H1 (cell line): ENCODE measurements at regions of chr11 and their contacts with region 1.

Region 1: GRCh38 chr11:342328-342727 is 21.7 kb upstream of the IFITM3 start:
- DNase-seq: no peak
- H3K4me3 ChIP-seq: no peak overlapping the region
- H3K27ac ChIP-seq: no peak overlapping the region
- H3K4me1 ChIP-seq: peaks cover 0 to 14% (median 9%) of the 10 kb centered on the region in 4 experiments; a peak in 5 of 7 replicates
- H3K27me3 ChIP-seq: no peaks in the 10 kb centered on the region
- CTCF ChIP-seq: no peak
- EP300 ChIP-seq: no peak
- POLR2A ChIP-seq: no peak
- RAD21 ChIP-seq: no peak

Region 2: GRCh38 chr11:236774-237767 is 105.3 kb before region 1 on chr11 and contains the start of gene PSMD13:
- CTCF ChIA-PET with region 1: no interaction called
- POLR2A ChIA-PET with region 1: no interaction called
- DNase-seq: peak in 1 of 2 experiments; percentile 87
- H3K4me3 ChIP-seq: peak within 1 kb of the TSS; percentile 96 to 98 (median 96)
- H3K27ac ChIP-seq: peak within 1 kb of the TSS; percentile 71; the same call in 1 of the 2 replicates
- H3K4me1 ChIP-seq: no peaks in the 10 kb centered on the region; a peak in 1 of 7 replicates
- H3K27me3 ChIP-seq: no peaks in the 10 kb centered on the region
- CTCF ChIP-seq: no peak
- EP300 ChIP-seq: no peak
- POLR2A ChIP-seq: peak in 1 of 2 experiments; percentile 18; a peak in 1 of 3 replicates
- RAD21 ChIP-seq: no peak
- total RNA-seq, gene PSMD13: 136 and 141 TPM in 2 replicates

Region 3: DNA sequence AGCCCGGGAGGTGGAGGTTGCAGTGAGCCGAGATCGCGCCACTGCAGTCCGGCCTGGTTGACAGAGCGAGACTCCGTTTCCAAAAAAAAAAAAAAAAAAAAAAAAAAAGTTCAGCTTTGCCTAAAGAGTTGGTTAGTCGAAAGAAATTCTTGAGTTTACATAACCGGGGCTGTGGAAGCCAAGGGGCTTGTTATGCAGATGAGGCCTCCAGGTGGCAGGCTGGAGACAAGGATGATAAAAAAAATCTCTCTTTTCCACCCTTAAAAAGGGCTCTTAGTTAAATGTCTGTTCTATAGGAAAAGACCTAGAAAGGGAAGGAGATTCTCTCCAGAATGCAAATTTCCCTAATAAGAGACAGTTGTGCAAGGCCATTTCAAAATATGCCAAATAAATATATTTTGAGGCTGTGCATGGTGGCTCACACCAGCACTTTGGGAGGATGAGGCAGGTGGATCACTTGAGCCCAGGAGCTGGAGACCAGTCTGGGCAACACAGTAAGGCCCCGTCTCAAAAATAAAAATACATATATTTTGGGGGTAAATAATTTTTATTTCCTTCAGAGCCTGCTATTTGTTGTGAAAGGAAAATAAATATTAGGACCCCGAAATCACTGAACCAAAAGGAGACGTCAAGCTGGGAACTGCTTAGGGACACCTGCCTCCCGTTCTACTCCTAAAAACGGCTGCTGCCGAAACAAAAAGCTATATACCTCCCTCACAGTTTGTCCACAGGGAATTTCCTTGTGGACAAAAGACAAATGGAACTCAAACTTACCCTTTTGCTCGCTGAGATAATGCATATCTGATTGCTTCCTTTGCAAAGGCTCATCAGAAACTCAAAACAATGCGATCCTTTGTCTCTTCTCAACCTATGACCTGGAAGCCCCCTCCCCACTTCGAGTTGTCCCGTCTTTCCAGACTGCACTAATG is 37.1 kb before region 1 on chr11:
- CTCF ChIA-PET with region 1: interaction called, 22 read pairs
- POLR2A ChIA-PET with region 1: interaction called, 7 read pairs
- DNase-seq: no peak
- H3K4me3 ChIP-seq: peak overlapping the region in 2 of 4 experiments; percentile 3 to 42; a peak in 2 of 8 replicates
- H3K27ac ChIP-seq: peak overlapping the region; percentile 31; the same call in 1 of the 2 replicates
- H3K4me1 ChIP-seq: peaks cover 17 to 46% (median 33%) of the 10 kb centered on the region in 4 experiments
- H3K27me3 ChIP-seq: no peaks in the 10 kb centered on the region; a peak in 1 of 7 replicates
- CTCF ChIP-seq: peak; percentile 19 to 44 (median 31); a peak in 3 of 4 replicates
- EP300 ChIP-seq: no peak
- POLR2A ChIP-seq: no peak
- RAD21 ChIP-seq: peak; percentile 34 to 39

Region 4: GRCh38 chr11:370087-371055 is 28.0 kb after region 1 on chr11:
- CTCF ChIA-PET with region 1: no interaction called
- POLR2A ChIA-PET with region 1: no interaction called
- DNase-seq: peak in 1 of 2 experiments; percentile 80
- H3K4me3 ChIP-seq: peak overlapping the region; percentile 70 to 78 (median 74)
- H3K27ac ChIP-seq: peak overlapping the region; percentile 45
- H3K4me1 ChIP-seq: peaks cover 0 to 10% (median 5%) of the 10 kb centered on the region in 4 experiments; a peak in 6 of 7 replicates
- H3K27me3 ChIP-seq: no peaks in the 10 kb centered on the region
- CTCF ChIP-seq: peak in 1 of 3 experiments; percentile 6; a peak in 1 of 4 replicates
- EP300 ChIP-seq: no peak
- POLR2A ChIP-seq: no peak; a peak in 1 of 3 replicates
- RAD21 ChIP-seq: no peak

Region 5: DNA sequence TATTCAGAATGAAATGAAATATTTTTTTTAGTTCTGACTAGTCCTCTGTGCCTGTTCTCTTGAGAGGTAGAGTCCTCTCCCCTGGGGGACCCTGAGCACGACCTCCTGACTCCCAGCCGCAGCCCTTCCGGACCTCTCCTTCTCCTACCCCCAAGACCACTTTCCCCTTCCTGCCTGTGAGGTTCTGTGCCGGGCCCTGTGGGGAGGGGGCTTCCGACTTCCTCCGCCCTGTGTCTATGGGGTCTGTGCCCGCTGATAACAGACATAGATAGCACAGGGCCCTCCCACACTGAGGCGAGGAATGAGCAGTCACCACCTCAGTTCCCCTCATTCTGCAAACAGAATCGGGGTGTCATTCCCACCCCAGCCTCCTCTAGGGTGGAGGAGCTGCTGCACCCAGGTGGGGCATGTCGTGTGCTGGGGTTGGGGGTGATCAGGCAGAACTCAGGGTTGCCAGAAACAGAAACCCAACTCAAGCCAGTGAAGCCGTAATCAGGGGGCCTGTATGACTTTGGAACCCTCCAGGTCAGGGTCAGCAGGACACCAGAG is 39.8 kb after region 1 on chr11:
- CTCF ChIA-PET with region 1: no interaction called
- POLR2A ChIA-PET with region 1: no interaction called
- DNase-seq: no peak
- H3K4me3 ChIP-seq: no peak overlapping the region
- H3K27ac ChIP-seq: no peak overlapping the region
- H3K4me1 ChIP-seq: no peaks in the 10 kb centered on the region
- H3K27me3 ChIP-seq: no peaks in the 10 kb centered on the region
- CTCF ChIP-seq: no peak
- EP300 ChIP-seq: no peak
- POLR2A ChIP-seq: no peak
- RAD21 ChIP-seq: no peak

Region 6: DNA sequence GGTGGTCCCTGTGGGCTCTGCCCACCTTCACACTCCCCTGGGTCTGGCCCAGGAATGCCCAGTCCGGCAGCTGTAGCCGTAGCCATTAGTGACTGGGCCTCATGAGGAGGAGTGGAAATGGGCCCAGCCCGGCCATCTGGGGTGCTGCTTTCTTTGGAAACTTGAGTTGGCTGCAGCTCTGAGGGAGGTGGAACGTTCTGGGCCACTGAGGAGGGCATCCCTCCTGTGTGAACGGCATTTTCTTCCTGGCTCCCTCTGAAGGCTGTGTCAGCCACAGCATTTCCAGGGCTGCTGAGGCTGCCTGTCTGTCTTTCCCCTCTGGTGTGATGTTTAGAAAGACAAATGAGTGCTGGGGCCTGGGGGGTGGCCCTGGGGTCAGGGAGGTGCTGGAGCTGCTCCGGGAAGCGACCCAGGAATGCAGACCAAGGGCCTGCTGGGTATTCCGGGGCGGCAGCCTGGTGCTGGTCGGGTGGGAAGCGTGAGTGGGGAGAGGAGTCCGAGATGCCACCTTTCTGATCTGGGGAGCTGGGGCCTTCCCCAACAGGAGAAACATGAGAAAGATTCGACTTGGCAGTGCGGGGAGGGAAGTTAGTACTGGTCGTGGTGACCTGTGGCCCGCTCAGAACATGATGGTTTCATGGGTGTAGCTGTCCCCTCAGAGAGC is 134.9 kb after region 1 on chr11:
- CTCF ChIA-PET with region 1: no interaction called
- POLR2A ChIA-PET with region 1: no interaction called
- DNase-seq: no peak
- H3K4me3 ChIP-seq: no peak overlapping the region
- H3K27ac ChIP-seq: no peak overlapping the region; the same call in 1 of the 2 replicates
- H3K4me1 ChIP-seq: peaks cover 0 to 3% (median under 1%) of the 10 kb centered on the region in 4 experiments; a peak in 2 of 7 replicates
- H3K27me3 ChIP-seq: no peaks in the 10 kb centered on the region
- CTCF ChIP-seq: no peak
- EP300 ChIP-seq: no peak
- POLR2A ChIP-seq: no peak
- RAD21 ChIP-seq: no peak; a peak in 2 of 4 replicates